Activated naive CD4-positive, alpha-beta T cell treated with anti-CD3 and anti-CD28 coated beads for 36 hours (primary cell): ENCODE measurements at regions of chr1 and their contacts with region 1.

Region 1: GRCh38 chr1:180631766-180632325 is at the start of gene XPR1:
- DNase-seq: peak; percentile 99
- H3K4me3 Mint-ChIP-seq: no peak within 1 kb of the TSS
- H3K27ac Mint-ChIP-seq: peak within 1 kb of the TSS; percentile 77
- H3K4me1 Mint-ChIP-seq: peaks cover 12% of the 10 kb centered on the region
- H3K27me3 Mint-ChIP-seq: no peaks in the 10 kb centered on the region
- total RNA-seq, gene XPR1: 14.8 to 18.1 TPM

Region 2: DNA sequence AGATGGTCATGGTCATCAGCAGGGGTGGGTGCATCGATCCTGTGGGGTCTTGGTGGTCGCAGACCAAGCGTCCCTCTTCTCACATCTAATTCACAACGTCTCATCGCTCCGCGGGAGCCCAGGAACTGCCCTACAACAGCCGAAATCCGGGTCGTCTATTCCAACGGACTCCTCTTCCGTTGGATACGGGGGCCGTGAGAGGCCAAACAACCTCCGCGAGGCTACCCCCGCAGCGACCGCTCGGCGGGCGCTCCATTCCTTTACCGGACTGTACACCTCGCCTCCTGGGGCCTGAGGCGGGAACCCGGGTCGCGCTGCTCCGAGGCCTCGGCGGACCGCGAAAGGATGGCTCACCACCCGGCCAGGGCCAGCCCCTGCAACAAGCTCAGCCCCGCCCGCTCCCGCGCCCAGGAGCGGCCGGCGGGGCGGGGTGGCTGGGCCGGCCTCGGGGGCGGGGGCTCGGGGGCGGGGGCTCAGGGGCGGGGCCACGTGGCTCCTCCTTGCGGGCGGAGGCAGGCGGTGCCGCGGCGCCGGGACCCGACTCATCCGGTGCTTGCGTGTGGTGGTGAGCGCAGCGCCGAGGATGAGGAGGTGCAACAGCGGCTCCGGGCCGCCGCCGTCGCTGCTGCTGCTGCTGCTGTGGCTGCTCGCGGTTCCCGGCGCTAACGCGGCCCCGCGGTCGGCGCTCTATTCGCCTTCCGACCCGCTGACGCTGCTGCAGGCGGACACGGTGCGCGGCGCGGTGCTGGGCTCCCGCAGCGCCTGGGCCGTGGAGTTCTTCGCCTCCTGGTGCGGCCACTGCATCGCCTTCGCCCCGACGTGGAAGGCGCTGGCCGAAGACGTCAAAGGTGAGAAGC is 477.3 kb before region 1 on chr1 and contains the start of gene QSOX1:
- CTCF ChIA-PET with region 1: no interaction called
- intact Hi-C with region 1: loop called (anchors 2 kb)
- DNase-seq: peak; percentile 91
- H3K4me3 Mint-ChIP-seq: peak within 1 kb of the TSS; percentile 89
- H3K27ac Mint-ChIP-seq: peak within 1 kb of the TSS; percentile 67
- H3K4me1 Mint-ChIP-seq: peaks cover 22% of the 10 kb centered on the region
- H3K27me3 Mint-ChIP-seq: no peaks in the 10 kb centered on the region
- total RNA-seq, gene QSOX1: 27.6 to 31.9 TPM

Region 3: DNA sequence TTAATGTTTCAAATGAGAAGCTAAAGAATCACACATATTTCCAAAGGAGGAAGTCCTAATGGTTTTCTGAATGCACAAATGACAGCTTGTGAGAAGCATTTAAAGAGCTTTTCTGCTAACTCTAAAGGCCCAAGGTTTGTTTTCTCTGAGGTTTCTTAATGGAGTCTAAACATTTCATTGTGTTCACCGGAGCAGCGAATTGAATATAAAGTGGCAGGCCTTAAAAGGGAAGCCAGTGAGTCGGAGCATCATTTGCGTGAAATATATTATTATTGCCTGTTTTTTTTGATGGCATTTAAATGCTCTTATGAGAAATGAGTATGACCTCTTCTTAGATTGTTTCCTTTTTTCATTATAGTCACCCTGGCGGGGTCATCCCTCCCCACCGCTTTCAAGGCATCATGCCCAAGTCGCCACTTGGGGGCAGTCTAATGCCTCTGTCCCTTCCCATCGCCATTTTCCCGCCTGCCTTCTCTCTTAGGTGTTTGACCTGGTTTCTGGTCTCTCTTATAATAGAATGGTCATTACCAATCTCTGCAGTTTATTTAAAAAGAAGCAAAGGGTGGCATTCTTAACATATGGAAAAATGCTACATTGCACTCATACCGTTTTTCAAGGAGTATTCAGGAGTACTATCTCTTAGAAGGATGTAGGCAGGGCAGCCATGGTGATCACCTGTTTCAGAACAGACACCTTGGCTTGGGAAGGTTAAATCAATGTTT is 98.4 kb before region 1 on chr1:
- CTCF ChIA-PET with region 1: interaction called, 3 read pairs
- intact Hi-C with region 1: loop called (anchors 1 kb)
- DNase-seq: peak; percentile 87
- H3K4me3 Mint-ChIP-seq: no peak overlapping the region
- H3K27ac Mint-ChIP-seq: no peak overlapping the region
- H3K4me1 Mint-ChIP-seq: no peaks in the 10 kb centered on the region
- H3K27me3 Mint-ChIP-seq: no peaks in the 10 kb centered on the region

Region 4: GRCh38 chr1:180585994-180586359 is 45.9 kb before region 1 on chr1:
- CTCF ChIA-PET with region 1: interaction called, 4 read pairs
- intact Hi-C with region 1: loop called (anchors 1 kb)
- DNase-seq: no peak
- H3K4me3 Mint-ChIP-seq: no peak overlapping the region
- H3K27ac Mint-ChIP-seq: peak overlapping the region; percentile 82
- H3K4me1 Mint-ChIP-seq: peaks cover 20% of the 10 kb centered on the region
- H3K27me3 Mint-ChIP-seq: peaks cover 2% of the 10 kb centered on the region

Region 5: GRCh38 chr1:181021811-181022434 is 390.1 kb after region 1 on chr1:
- CTCF ChIA-PET with region 1: interaction called, 3 read pairs
- intact Hi-C with region 1: loop called (anchors 2 kb)
- DNase-seq: peak; percentile 78
- H3K4me3 Mint-ChIP-seq: peak overlapping the region; percentile 86
- H3K27ac Mint-ChIP-seq: peak overlapping the region; percentile 94
- H3K4me1 Mint-ChIP-seq: peaks cover 35% of the 10 kb centered on the region
- H3K27me3 Mint-ChIP-seq: no peaks in the 10 kb centered on the region

Region 6: GRCh38 chr1:181255270-181255929 is 623.6 kb after region 1 on chr1:
- CTCF ChIA-PET with region 1: no interaction called
- intact Hi-C with region 1: no loop called
- DNase-seq: no peak
- H3K4me3 Mint-ChIP-seq: no peak overlapping the region
- H3K27ac Mint-ChIP-seq: no peak overlapping the region
- H3K4me1 Mint-ChIP-seq: no peaks in the 10 kb centered on the region
- H3K27me3 Mint-ChIP-seq: no peaks in the 10 kb centered on the region

Region 7: DNA sequence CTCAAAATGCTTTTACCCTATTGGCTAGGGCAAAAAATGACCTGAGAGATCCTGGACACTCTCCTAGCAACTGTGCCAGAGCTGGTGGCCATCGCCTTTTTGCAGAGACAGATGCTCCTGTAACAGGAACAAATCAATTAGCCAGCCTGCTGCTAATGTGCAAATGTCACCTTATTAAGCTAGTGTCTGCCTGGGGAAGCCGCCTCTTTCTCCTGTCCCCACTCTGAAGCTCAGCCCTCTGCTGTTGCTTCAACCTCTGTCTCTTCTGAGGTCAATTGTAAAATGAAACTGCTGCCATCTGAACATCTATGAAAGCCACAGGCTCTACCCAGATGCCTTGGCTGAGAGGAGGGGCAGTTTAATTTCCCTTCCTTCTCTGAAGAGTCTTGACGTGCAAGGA is 766.0 kb after region 1 on chr1:
- CTCF ChIA-PET with region 1: no interaction called
- intact Hi-C with region 1: loop called (anchors 5 kb)
- DNase-seq: peak; percentile 23
- H3K4me3 Mint-ChIP-seq: no peak overlapping the region
- H3K27ac Mint-ChIP-seq: no peak overlapping the region
- H3K4me1 Mint-ChIP-seq: peaks cover 39% of the 10 kb centered on the region
- H3K27me3 Mint-ChIP-seq: no peaks in the 10 kb centered on the region

Region 8: GRCh38 chr1:182588500-182589452 is 1956.9 kb after region 1 on chr1 and contains the start of gene RNASEL:
- CTCF ChIA-PET with region 1: no interaction called
- intact Hi-C with region 1: loop called (anchors 5 kb)
- DNase-seq: peak; percentile 62
- H3K4me3 Mint-ChIP-seq: peak within 1 kb of the TSS; percentile 86
- H3K27ac Mint-ChIP-seq: peak within 1 kb of the TSS; percentile 98
- H3K4me1 Mint-ChIP-seq: peaks cover 49% of the 10 kb centered on the region
- H3K27me3 Mint-ChIP-seq: no peaks in the 10 kb centered on the region
- total RNA-seq, gene RNASEL: 2.5 TPM